Naive thymus-derived CD4-positive, alpha-beta T cell (primary cell): ENCODE measurements at regions of chr16 and their contacts with region 1.

Region 1: GRCh38 chr16:84754353-84754856 is 54.6 kb downstream of the USP10 start:
- DNase-seq: peak in 8 of 9 donors; percentile 50 to 87 (median 83)
- ATAC-seq: peak; percentile 78
- H3K4me3 ChIP-seq: peak overlapping the region; percentile 4
- H3K4me3 Mint-ChIP-seq: peak overlapping the region; percentile 49 to 79 (median 69)
- H3K27ac ChIP-seq: peak overlapping the region; percentile 44
- H3K27ac Mint-ChIP-seq: peak overlapping the region; percentile 69 to 92 (median 84)
- H3K4me1 ChIP-seq: peaks cover 19 to 38% of the 10 kb centered on the region in 2 donors
- H3K4me1 Mint-ChIP-seq: peaks cover 46 to 83% (median 79%) of the 10 kb centered on the region in 7 donors
- H3K27me3 ChIP-seq: no peaks in the 10 kb centered on the region
- H3K27me3 Mint-ChIP-seq: no peaks in the 10 kb centered on the region

Region 2: DNA sequence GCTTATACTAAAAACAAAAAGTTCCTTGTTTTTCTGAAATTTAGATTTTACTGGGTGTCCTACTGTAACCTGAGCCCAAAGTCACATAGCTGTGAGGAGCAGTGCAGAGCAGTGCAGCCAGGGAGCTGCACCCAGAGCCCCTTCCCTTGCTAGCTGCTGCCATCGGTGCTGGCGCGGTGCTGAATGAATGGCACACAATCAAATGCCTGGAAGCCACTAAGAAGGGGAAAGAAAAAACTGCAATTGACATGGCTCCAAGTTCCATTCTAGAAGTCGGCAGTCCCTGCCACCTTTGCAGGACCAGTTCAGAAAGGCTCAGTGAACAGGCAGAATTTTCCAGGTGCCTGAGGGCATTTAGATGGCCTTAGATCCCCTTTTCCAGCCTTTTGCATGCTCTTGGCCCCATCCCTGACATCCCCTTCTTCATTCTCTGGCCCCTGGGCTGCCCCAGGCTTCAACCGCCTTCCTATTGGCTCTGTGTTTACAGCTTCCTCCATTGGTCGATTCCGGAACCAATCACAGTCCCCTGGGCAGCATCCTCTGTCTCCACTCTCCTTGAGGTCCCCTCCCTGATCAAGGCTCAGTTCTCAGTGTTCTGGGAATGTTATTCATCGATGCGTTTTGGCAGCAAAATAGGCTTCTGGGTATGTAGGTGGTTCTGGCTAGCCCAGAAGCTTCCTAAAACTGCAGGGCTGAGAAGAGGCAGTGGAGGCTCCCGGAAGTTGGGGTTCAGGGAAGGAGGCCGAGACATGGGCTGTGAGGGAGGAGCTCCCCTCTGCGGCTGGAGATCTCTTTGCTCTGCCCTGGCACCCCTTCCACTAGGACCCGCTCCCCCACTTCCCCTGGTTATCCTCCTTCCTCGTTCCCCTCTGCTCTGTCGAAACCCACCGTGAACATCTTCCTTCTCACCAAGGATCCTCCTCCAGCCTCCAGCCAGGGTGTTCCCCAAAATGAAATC is 348.1 kb before region 1 on chr16:
- CTCF ChIA-PET with region 1: no interaction called
- POLR2A ChIA-PET with region 1: no interaction called
- intact Hi-C with region 1: no loop called
- DNase-seq: no peak
- ATAC-seq: no peak
- H3K4me3 ChIP-seq: no peak overlapping the region
- H3K4me3 Mint-ChIP-seq: no peak overlapping the region
- H3K27ac ChIP-seq: no peak overlapping the region
- H3K27ac Mint-ChIP-seq: no peak overlapping the region
- H3K4me1 ChIP-seq: no peaks in the 10 kb centered on the region
- H3K4me1 Mint-ChIP-seq: peaks cover 0 to 3% (median 0%) of the 10 kb centered on the region in 7 donors
- H3K27me3 ChIP-seq: no peaks in the 10 kb centered on the region
- H3K27me3 Mint-ChIP-seq: peaks cover 25 to 50% (median 45%) of the 10 kb centered on the region in 5 donors

Region 3: DNA sequence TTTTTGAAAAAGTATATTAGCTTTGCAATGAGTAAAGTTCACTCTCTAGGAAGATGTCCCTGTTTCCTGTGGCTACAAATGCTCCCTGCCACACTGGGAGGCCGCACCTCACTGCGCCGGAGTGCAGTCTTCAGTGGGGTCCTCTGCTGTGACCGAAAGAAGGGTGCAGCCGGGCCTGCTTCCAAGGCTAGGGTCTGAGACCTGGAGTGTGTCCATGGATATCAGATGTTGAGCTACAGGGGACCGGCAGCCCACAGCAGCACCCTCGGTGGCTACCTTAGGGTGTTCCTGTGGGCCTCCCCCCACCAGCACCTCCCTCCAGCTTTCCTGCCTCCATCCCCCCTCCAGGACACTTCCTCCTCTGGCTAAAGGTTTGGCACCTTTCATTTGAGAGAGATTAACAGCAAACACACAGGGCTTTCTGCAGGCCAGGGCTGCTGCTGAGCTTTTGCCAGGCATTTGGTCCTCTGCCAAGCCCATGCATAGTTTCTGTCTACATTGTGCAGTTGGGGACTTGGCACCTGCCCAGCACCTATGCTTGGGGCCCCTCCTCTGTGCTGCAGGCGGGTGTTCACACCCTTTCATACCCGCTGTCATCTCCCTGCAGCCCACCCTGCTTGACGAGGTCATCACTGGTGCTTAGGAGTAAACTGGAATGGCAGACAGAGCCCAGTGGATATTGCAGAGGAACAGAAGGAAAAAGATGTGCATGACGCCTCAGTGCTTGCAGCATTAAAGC is 31.6 kb after region 1 on chr16:
- CTCF ChIA-PET with region 1: interaction called, 7 read pairs
- POLR2A ChIA-PET with region 1: interaction called, 3 read pairs
- intact Hi-C with region 1: loop called in 1 of 2 experiments (anchors 1 kb)
- DNase-seq: no peak
- ATAC-seq: no peak
- H3K4me3 ChIP-seq: no peak overlapping the region
- H3K4me3 Mint-ChIP-seq: no peak overlapping the region
- H3K27ac ChIP-seq: no peak overlapping the region
- H3K27ac Mint-ChIP-seq: no peak overlapping the region
- H3K4me1 ChIP-seq: no peaks in the 10 kb centered on the region
- H3K4me1 Mint-ChIP-seq: peaks cover 0 to 4% (median 0%) of the 10 kb centered on the region in 7 donors
- H3K27me3 ChIP-seq: no peaks in the 10 kb centered on the region
- H3K27me3 Mint-ChIP-seq: no peaks in the 10 kb centered on the region

Region 4: GRCh38 chr16:84800158-84800978 is 46.0 kb after region 1 on chr16:
- CTCF ChIA-PET with region 1: no interaction called
- POLR2A ChIA-PET with region 1: no interaction called
- intact Hi-C with region 1: no loop called
- DNase-seq: no peak
- ATAC-seq: no peak
- H3K4me3 ChIP-seq: no peak overlapping the region
- H3K4me3 Mint-ChIP-seq: no peak overlapping the region
- H3K27ac ChIP-seq: no peak overlapping the region
- H3K27ac Mint-ChIP-seq: no peak overlapping the region
- H3K4me1 ChIP-seq: no peaks in the 10 kb centered on the region
- H3K4me1 Mint-ChIP-seq: peaks cover 0 to 3% (median under 1%) of the 10 kb centered on the region in 7 donors
- H3K27me3 ChIP-seq: no peaks in the 10 kb centered on the region
- H3K27me3 Mint-ChIP-seq: peaks cover 0 to 9% (median 0%) of the 10 kb centered on the region in 5 donors

Region 5: DNA sequence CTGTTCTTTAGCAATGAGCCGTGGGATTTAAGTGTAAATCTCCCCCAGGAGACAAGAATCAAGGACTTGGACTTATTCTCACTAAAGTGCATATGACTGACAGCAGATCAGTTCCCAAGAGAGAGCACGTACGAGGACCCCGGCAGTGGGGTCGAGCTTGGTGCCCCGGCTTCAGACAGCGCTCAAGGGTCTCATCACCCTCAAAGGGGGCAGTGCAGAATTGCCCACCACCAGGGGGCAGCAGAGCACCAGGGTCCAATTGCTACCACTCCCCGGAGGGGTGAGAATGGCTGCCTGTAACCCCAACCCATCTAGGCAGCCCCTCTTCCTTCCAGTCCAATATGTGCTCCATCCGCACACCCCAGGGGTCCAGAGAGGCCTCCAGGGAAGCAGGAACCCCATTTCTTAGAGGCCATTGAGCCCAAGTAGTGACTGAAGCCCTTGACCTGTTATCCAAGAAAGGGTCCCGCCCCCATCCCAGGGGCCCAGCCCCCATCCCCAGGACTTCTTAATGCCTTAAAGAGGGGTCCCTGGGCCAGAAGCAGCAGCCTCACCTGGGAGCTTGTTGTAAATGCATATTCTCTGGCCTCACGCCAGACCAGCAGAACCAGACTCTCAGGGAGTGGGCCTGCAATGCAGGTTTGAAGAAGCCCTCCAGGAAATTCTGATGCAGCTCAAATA is 170.8 kb after region 1 on chr16:
- CTCF ChIA-PET with region 1: interaction called, 13 read pairs
- POLR2A ChIA-PET with region 1: no interaction called
- intact Hi-C with region 1: loop called in 1 of 2 experiments (anchors 1 kb)
- DNase-seq: peak; percentile 23 to 74 (median 57)
- ATAC-seq: peak; percentile 71
- H3K4me3 ChIP-seq: no peak overlapping the region
- H3K4me3 Mint-ChIP-seq: no peak overlapping the region
- H3K27ac ChIP-seq: no peak overlapping the region
- H3K27ac Mint-ChIP-seq: no peak overlapping the region
- H3K4me1 ChIP-seq: no peaks in the 10 kb centered on the region
- H3K4me1 Mint-ChIP-seq: peaks cover 0 to 4% (median 0%) of the 10 kb centered on the region in 7 donors
- H3K27me3 ChIP-seq: no peaks in the 10 kb centered on the region
- H3K27me3 Mint-ChIP-seq: no peaks in the 10 kb centered on the region

Region 6: DNA sequence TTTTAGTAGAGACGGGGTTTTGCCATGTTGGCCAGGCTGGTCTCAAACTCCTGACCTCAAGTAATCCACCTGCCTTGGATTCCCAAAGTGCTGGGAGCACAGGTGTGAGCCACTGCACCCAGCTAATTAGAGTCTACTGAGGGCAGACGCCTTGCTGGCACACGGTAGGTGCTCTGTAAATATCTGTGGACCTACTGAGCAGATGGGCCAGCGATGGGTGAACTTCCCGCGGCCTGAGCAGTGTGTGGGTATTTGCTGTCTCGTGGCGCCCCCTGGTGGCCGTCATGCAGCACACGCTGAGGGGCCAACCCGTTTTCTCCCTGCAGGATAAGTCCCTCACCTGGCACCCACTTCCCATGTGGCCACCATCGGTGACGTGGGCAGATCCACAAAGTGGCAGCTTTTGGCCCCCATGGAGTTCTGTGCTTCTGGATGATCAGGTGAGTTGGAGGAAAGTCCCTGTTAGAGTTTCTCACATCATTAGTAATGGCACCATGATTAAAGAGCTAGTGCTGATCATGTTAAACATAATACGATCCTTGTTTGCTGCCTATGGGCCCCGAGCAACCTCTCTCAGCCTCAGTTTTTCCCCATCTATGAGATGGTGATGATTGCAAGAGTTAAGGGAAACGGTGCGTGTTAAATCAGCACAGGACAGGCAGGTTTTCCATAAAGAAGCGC is 216.2 kb after region 1 on chr16:
- CTCF ChIA-PET with region 1: interaction called, 60 read pairs
- POLR2A ChIA-PET with region 1: interaction called, 3 read pairs
- intact Hi-C with region 1: loop called (anchors 1 kb)
- DNase-seq: peak; percentile 60 to 79 (median 74)
- ATAC-seq: peak; percentile 92
- H3K4me3 ChIP-seq: no peak overlapping the region
- H3K4me3 Mint-ChIP-seq: no peak overlapping the region
- H3K27ac ChIP-seq: no peak overlapping the region
- H3K27ac Mint-ChIP-seq: peak overlapping the region in 3 of 9 donors; percentile 9 to 78 (median 46)
- H3K4me1 ChIP-seq: peaks cover 0 to 6% of the 10 kb centered on the region in 2 donors
- H3K4me1 Mint-ChIP-seq: peaks cover 0 to 8% (median 4%) of the 10 kb centered on the region in 7 donors
- H3K27me3 ChIP-seq: no peaks in the 10 kb centered on the region
- H3K27me3 Mint-ChIP-seq: no peaks in the 10 kb centered on the region